H1 (cell line): ENCODE measurements at regions of chr4 and their contacts with region 1.

Region 1: GRCh38 chr4:53786632-53787031 is 195.3 kb upstream of the LNX1 start:
- DNase-seq: no peak
- H3K4me3 ChIP-seq: no peak overlapping the region
- H3K27ac ChIP-seq: no peak overlapping the region
- H3K4me1 ChIP-seq: no peaks in the 10 kb centered on the region
- H3K27me3 ChIP-seq: peaks cover 0 to 1% (median 0%) of the 10 kb centered on the region in 4 experiments; a peak in 1 of 7 replicates
- CTCF ChIP-seq: no peak
- EP300 ChIP-seq: no peak
- POLR2A ChIP-seq: no peak
- RAD21 ChIP-seq: no peak

Region 2: DNA sequence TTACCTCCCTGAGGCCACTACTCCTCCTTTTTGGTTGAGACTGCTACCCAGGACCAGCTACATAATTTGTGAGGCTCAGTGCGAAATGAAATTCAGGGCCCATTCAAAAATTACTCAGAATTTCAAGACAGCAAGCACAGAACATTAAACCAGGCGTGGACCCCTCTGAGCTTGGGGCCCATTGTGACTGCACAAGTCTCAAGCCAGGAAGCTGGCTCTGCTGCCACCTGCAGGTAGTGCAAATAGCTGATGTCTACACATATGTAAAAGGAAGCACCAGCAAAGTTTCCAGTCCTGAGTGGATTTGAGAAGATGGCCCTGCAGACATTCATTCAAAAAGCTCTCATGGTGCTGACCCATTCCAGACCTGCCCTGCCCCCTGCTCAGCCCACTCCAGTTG is 18.1 kb after region 1 on chr4:
- CTCF ChIA-PET with region 1: interaction called, 10 read pairs
- POLR2A ChIA-PET with region 1: no interaction called
- DNase-seq: peak; percentile 7 to 66
- H3K4me3 ChIP-seq: no peak overlapping the region
- H3K27ac ChIP-seq: no peak overlapping the region
- H3K4me1 ChIP-seq: no peaks in the 10 kb centered on the region
- H3K27me3 ChIP-seq: no peaks in the 10 kb centered on the region
- CTCF ChIP-seq: peak; percentile 65 to 68 (median 66)
- EP300 ChIP-seq: no peak
- POLR2A ChIP-seq: no peak
- RAD21 ChIP-seq: peak; percentile 72 to 78